ENCODE measurements at regions of chr12 and their contacts with region 1.

Region 1: DNA sequence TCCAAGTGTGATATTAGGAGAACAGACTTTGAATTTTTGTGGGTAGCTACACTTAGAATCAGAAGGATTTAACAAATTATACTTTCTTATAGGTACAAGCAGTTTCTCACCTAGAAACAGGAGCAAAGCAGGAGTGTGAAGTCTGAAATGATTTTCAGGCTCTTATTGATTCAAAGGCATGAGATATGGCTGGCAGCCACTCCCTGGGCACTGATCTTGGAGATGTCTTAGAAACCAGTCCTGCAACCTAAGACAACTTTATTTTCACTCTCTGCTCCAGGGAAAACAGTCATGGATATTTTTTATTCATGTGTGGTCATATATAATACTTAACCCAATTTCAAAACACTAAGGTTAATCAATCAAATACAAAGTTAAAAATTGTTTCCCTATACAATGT is 254.9 kb upstream of the TMEM132C start:
- DNase-seq: peak; percentile 40
- H3K4me3 ChIP-seq: no peak overlapping the region
- H3K27ac ChIP-seq: peak overlapping the region in 3 of 4 donors; percentile 32 to 45 (median 41)
- H3K4me1 ChIP-seq: peaks cover 0 to 35% (median 9%) of the 10 kb centered on the region in 4 donors
- H3K27me3 ChIP-seq: no peaks in the 10 kb centered on the region
- CTCF ChIP-seq: no peak
- EP300 ChIP-seq: no peak
- POLR2A ChIP-seq: no peak

Region 2: GRCh38 chr12:126772171-126772864 is 1239.8 kb before region 1 on chr12:
- in situ Hi-C with region 1: no loop called
- intact Hi-C with region 1: loop called (anchors 5 kb)
- DNase-seq: peak; percentile 15
- H3K4me3 ChIP-seq: peak overlapping the region in 3 of 4 donors; percentile 6 to 17 (median 15)
- H3K27ac ChIP-seq: peak overlapping the region; percentile 18 to 55 (median 50)
- H3K4me1 ChIP-seq: no peaks in the 10 kb centered on the region
- H3K27me3 ChIP-seq: no peaks in the 10 kb centered on the region
- CTCF ChIP-seq: no peak
- EP300 ChIP-seq: no peak
- POLR2A ChIP-seq: no peak

Region 3: GRCh38 chr12:128059621-128060370 is 47.7 kb after region 1 on chr12:
- in situ Hi-C with region 1: no loop called
- intact Hi-C with region 1: no loop called
- DNase-seq: no peak
- H3K4me3 ChIP-seq: no peak overlapping the region
- H3K27ac ChIP-seq: no peak overlapping the region
- H3K4me1 ChIP-seq: no peaks in the 10 kb centered on the region
- H3K27me3 ChIP-seq: no peaks in the 10 kb centered on the region
- CTCF ChIP-seq: no peak
- EP300 ChIP-seq: no peak
- POLR2A ChIP-seq: no peak

Measured in transverse colon (tissue), 4 donors.